Mucosa of descending colon (tissue), 3 donors: ENCODE measurements at regions of chr6 and their contacts with region 1.

Region 1: DNA sequence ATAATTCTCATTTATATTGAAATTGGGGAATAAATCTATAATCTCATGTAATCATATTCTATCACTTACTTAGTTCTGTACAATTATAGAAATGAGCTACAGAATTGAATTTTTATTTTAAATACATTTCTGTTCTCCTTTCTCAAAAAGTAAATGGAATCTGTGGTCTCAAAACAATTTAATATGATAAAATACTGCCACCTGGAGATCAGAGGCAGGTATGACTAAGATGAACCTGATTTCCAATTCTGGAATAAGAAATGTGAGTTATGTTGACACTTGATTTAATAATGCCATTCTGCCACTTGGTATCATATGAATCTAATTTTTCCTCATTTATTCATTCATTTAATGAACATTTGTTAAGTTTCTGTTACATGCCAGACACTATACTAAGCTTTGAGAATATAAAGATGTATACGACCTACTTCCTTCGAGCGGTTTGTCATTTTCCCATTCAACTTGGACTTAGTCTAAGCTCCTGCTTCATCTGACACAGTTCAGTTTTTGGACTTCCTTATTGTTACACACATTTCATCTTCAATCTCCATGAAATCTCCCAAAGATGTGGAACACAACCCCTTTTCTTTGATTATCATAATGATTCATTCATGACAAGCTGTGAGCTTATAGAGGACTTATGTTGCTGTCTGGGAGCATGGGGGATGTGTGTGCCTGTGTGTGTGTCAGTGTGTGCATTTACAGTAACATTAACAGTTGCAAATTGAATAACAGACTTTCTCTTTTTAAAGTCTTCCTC is 7.5 kb upstream of the CCDC28A start:
- DNase-seq: peak in 1 of 3 donors; percentile 9
- ATAC-seq: no peak
- H3K4me3 ChIP-seq: no peak overlapping the region
- H3K4me1 ChIP-seq: no peaks in the 10 kb centered on the region
- CTCF ChIP-seq: peak; percentile 49

Region 2: GRCh38 chr6:138638604-138639003 is 127.5 kb before region 1 on chr6:
- intact Hi-C with region 1: no loop called
- DNase-seq: no peak
- ATAC-seq: no peak
- H3K4me3 ChIP-seq: no peak overlapping the region
- H3K4me1 ChIP-seq: no peaks in the 10 kb centered on the region
- CTCF ChIP-seq: no peak

Region 3: DNA sequence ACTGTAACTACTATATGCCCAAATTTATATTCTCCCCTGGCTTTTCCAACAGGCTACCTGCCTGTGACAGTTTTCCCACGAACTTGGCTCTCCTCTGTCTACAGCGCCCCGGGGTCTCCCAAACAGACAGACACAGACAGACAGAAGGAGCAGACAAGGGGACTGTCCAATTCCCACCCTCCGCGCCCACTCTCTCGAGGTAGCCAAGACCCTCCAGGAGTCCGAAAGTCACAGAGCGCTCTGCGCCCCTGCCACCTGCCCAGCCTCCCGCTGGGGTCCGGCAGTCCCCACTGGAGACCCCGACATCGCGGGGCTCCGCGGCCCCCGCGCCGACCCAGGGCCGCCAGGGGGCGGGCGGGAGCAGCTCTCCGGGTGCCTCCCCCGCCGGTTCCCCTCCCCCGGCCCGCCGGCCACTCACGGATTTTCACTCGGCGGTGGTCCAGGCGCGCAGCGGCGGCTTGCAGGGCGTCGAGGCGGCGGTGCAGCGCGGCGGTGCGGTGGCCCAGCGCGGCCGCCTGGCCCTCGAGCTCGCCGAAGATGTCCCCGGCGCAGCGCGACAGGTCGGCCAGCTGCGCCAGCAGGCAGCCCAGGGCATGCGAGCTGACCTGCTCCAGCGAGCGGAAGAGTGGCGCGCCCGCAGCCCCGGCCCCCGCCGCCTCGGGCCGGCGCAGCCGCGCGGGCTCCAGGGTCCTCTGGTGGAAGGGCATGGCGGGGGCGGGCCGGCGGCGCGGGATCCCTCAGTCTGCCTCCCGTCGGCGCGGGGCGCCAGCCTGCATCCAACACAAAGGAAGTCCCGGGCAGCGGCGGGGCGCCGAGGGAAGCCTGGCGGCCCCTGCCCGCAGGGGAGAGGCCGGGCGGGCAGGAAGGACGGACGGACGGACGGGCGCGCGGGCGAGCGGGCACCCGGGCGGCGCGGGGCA is 73.8 kb before region 1 on chr6:
- intact Hi-C with region 1: loop called in 1 of 2 experiments (anchors 10 kb)
- DNase-seq: peak; percentile 69 to 84 (median 78)
- ATAC-seq: peak; percentile 75
- H3K4me3 ChIP-seq: peak overlapping the region; percentile 74
- H3K4me1 ChIP-seq: no peaks in the 10 kb centered on the region
- CTCF ChIP-seq: peak; percentile 96

Region 4: DNA sequence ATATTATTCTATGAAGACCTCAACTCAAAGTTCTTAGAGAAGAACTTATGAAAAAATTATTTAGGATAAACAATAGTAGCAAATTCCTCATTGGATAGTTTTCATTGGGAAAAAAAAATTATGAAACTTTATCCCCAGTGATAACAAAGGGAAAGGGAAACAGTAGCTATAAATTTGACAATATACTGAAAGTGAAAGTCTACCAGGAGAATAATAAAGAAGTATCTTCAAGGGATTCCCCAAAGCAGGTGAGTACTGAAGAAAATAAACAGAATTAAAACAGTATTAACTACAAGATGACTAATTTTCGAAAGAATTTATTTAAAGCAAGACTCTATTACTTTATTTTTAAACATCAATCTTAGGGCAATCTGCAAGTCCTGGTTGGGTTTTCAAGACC is 165.6 kb after region 1 on chr6:
- intact Hi-C with region 1: no loop called
- DNase-seq: no peak
- ATAC-seq: no peak
- H3K4me3 ChIP-seq: no peak overlapping the region
- H3K4me1 ChIP-seq: no peaks in the 10 kb centered on the region
- CTCF ChIP-seq: no peak

Region 5: GRCh38 chr6:139016337-139017213 is 250.5 kb after region 1 on chr6:
- intact Hi-C with region 1: no loop called
- DNase-seq: no peak
- ATAC-seq: no peak
- H3K4me3 ChIP-seq: no peak overlapping the region
- H3K4me1 ChIP-seq: peaks cover 5% of the 10 kb centered on the region
- CTCF ChIP-seq: no peak